MCF 10A (cell line): ENCODE measurements at regions of chr12 and their contacts with region 1.

Region 1: DNA sequence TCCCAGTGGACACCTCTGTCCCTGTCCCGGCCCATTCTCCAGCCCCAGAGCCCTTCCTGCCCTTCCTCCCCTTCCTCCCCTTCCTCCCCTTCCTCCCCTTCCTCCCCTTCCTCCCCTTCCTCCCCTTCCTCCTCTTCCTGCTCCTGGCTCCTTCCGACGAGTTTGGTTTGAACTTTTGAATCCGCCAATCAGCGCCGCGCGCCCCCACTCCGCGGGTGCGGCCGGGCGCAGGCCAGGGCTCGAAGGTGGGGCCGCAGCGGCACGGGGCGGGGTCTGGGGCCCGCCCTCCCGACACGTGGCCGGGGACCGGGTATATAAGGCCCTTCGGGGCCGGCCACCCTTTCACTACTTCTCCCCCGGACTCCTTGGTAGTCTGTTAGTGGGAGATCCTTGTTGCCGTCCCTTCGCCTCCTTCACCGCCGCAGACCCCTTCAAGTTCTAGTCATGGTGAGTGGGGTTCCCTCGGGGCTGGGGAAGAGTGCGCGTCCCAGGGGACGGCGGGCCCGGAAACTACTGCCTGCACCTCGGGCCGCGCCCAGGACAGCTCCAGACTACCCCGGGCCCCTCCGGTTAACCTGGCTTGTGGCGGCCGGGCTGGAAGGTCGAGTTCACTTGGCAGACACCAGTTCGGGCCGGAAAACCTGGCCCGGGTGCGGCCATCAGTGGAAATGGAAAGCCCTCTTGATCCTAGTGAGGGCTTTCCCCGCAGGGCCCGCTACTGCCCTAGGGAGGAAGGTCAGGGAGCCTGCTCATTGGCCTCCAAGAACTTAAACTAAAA is at the start of gene TUBA1C:
- DNase-seq: peak; percentile 96
- H3K4me3 Mint-ChIP-seq: peak within 1 kb of the TSS; percentile 85
- H3K27ac Mint-ChIP-seq: peak within 1 kb of the TSS; percentile 97
- H3K4me1 Mint-ChIP-seq: peaks cover 31% of the 10 kb centered on the region
- H3K27me3 Mint-ChIP-seq: no peaks in the 10 kb centered on the region
- CTCF ChIP-seq: no peak
- total RNA-seq, gene TUBA1C: 253 and 303 TPM in 2 replicates

Region 2: GRCh38 chr12:49110464-49111155 is 154.3 kb before region 1 on chr12 and contains the start of gene LMBR1L:
- CTCF ChIA-PET with region 1: no interaction called
- POLR2A ChIA-PET with region 1: interaction called, 26 read pairs
- intact Hi-C with region 1: no loop called
- DNase-seq: peak; percentile 99
- H3K4me3 Mint-ChIP-seq: peak within 1 kb of the TSS; percentile 86
- H3K27ac Mint-ChIP-seq: peak within 1 kb of the TSS; percentile 97
- H3K4me1 Mint-ChIP-seq: peaks cover 18% of the 10 kb centered on the region
- H3K27me3 Mint-ChIP-seq: no peaks in the 10 kb centered on the region
- CTCF ChIP-seq: peak; percentile 14
- total RNA-seq, gene LMBR1L: 27.8 and 35.7 TPM in 2 replicates

Region 3: DNA sequence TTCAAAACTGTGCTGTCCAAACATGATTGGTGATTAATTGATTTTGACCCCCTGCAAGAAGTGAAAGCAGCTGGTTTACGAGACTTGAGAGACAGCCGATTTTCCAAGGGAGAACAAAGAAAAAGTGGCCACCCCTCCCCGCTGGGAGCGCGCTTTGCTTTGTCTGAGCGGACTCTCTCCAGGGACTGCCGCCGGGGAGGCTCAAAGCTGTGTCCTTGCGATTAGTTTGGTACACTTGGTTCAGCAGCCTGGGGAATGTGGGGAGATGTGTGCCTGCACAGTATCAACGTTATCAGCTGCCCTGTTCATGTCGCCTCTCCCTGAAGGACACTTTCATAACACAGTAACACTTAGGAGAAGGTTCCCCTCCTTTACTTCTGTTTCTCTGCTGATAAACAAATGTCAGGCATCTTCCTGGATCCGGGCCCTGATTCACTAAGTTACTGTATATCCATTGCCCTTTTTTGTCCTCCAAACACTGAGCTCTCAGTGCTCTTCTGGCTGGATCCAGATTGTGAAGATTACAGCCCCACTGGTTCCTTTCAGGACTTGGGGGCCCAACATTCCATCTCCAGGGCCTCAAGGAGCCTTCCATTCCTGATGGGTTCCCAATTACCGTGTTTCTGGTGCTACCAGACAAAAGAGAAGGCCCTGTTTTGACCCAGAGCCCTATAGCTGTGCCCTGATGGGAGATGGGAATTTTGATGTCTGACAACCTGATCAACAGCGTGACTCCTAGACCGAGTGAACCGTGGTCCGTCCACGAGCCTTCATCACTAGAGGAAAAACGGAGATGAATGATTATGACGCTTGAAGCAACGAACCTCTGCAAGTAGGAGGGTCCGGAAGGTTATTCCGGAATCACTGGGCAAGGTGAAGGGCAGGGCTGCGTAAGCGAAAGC is 31.7 kb before region 1 on chr12:
- CTCF ChIA-PET with region 1: no interaction called
- POLR2A ChIA-PET with region 1: interaction called, 15 read pairs
- intact Hi-C with region 1: no loop called
- DNase-seq: no peak
- H3K4me3 Mint-ChIP-seq: peak overlapping the region; percentile 32
- H3K27ac Mint-ChIP-seq: no peak overlapping the region
- H3K4me1 Mint-ChIP-seq: peaks cover 5% of the 10 kb centered on the region
- H3K27me3 Mint-ChIP-seq: no peaks in the 10 kb centered on the region
- CTCF ChIP-seq: no peak

Region 4: DNA sequence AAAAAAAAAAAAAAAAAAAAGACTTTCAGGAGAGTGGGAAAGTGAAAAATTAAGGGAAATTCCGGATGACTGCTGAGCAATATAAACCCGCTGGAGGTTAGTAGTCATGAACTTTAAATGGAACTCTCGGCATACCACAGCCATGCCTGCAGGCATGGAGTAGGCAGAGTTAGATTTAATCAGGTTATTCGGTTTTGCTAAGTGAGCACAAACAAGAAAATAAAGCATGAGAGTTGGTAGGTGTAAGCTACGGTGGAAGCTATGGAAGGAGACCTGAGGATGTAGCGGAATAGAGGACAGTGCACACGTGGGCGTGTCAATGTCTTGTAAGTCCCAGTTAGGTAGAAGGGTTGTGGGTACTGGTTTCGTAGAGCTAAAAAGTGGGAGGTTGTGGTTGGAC is 11.8 kb before region 1 on chr12:
- CTCF ChIA-PET with region 1: interaction called, 15 read pairs
- POLR2A ChIA-PET with region 1: interaction called, 15 read pairs
- intact Hi-C with region 1: no loop called
- DNase-seq: no peak
- H3K4me3 Mint-ChIP-seq: no peak overlapping the region
- H3K27ac Mint-ChIP-seq: no peak overlapping the region
- H3K4me1 Mint-ChIP-seq: peaks cover 6% of the 10 kb centered on the region
- H3K27me3 Mint-ChIP-seq: no peaks in the 10 kb centered on the region
- CTCF ChIP-seq: no peak

Region 5: DNA sequence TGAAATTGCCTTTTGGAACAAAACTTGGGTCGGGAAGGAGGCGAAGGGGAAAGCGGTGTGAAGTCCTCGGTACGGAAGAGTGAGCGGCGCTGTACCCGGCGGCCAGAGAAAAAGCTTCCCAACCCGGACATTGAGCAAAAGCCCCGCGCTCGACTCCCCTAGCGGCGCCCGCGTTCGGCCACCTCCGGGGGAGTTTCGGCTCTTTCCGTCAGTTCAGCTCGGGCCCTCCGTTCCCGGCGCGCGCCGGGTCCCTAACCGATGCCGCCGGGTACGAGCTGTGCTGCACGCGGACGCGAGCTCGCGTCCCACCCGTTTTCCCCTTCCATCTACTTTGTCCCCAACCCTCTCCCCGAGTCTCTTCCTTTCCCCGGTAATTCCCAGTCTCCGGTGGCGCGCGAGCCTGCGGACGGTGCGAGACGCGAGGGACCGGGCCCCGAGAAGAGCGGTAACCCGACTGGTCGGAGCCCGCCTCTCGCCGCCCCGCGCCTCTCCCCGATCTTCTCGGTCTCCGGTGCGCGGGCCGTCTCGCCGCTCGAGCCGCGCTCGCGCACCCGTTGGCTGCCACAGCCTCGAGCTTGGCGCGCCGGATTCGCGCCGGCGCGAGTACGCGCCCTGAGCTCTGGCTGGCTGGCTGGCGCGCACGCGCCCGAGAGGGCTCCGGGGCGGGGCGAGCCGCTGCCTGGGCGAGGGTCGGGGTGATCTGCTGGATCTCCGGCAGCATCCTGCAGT is 101.9 kb after region 1 on chr12:
- CTCF ChIA-PET with region 1: interaction called, 4 read pairs
- POLR2A ChIA-PET with region 1: interaction called, 57 read pairs
- intact Hi-C with region 1: no loop called
- DNase-seq: peak; percentile 89
- H3K4me3 Mint-ChIP-seq: peak overlapping the region; percentile 80
- H3K27ac Mint-ChIP-seq: peak overlapping the region; percentile 33
- H3K4me1 Mint-ChIP-seq: peaks cover 24% of the 10 kb centered on the region
- H3K27me3 Mint-ChIP-seq: no peaks in the 10 kb centered on the region
- CTCF ChIP-seq: peak; percentile 6